ENCODE measurements at regions of chr10 and their contacts with region 1.

Region 1: DNA sequence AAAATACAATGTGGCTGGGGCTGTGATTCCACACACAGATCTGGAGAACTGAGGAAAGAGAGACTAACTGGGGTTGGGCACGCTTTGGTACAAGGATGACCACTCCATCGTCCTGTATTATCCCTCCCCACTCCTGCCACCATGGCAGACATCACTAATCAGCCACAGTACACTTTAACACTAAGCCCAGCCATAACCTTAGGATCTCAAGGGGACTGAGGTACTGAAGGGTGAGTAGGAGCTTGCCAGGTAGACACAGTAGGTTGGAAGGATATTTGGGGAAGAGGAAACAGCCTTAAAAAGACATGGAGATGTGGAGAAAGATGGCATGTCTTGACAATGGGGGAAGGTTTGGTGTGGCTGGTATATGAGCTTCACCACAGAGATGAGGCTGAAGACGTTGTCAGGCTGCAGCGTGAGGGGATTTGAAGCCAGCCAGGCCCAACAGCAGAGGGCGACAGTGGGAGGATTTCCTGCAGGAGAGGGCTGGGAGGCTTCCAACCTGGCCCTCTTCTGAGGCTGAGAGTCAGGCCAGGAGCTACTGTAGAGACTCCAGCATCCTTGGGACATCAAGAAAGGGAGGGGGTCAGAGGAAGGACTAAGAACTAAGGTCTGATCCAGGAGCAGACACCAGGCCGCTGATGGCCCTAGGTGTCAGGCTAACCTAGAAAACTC is 58.6 kb upstream of the COL13A1 start:
- DNase-seq: peak; percentile 19 to 86
- H3K4me3 ChIP-seq: no peak overlapping the region
- H3K27ac ChIP-seq: no peak overlapping the region
- H3K4me1 ChIP-seq: peaks cover 0 to 9% (median 1%) of the 10 kb centered on the region in 4 experiments; a peak in 3 of 7 replicates
- H3K27me3 ChIP-seq: no peaks in the 10 kb centered on the region
- CTCF ChIP-seq: peak; percentile 89 to 94 (median 90)
- EP300 ChIP-seq: no peak
- POLR2A ChIP-seq: no peak
- RAD21 ChIP-seq: peak; percentile 66 to 81

Region 2: GRCh38 chr10:69403519-69403918 is 339.5 kb before region 1 on chr10:
- CTCF ChIA-PET with region 1: no interaction called
- POLR2A ChIA-PET with region 1: no interaction called
- DNase-seq: no peak
- H3K4me3 ChIP-seq: no peak overlapping the region
- H3K27ac ChIP-seq: no peak overlapping the region
- H3K4me1 ChIP-seq: peaks cover 0 to 10% (median 7%) of the 10 kb centered on the region in 4 experiments; a peak in 6 of 7 replicates
- H3K27me3 ChIP-seq: no peaks in the 10 kb centered on the region
- CTCF ChIP-seq: no peak
- EP300 ChIP-seq: no peak
- POLR2A ChIP-seq: no peak
- RAD21 ChIP-seq: no peak

Region 3: GRCh38 chr10:69657430-69657829 is 85.6 kb before region 1 on chr10:
- CTCF ChIA-PET with region 1: interaction called, 992 read pairs
- POLR2A ChIA-PET with region 1: no interaction called
- DNase-seq: no peak
- H3K4me3 ChIP-seq: no peak overlapping the region
- H3K27ac ChIP-seq: no peak overlapping the region
- H3K4me1 ChIP-seq: peaks cover 0 to 26% (median 13%) of the 10 kb centered on the region in 4 experiments; a peak in 6 of 7 replicates
- H3K27me3 ChIP-seq: peaks cover 0 to 3% (median 0%) of the 10 kb centered on the region in 4 experiments; a peak in 4 of 7 replicates
- CTCF ChIP-seq: no peak
- EP300 ChIP-seq: no peak
- POLR2A ChIP-seq: no peak
- RAD21 ChIP-seq: no peak

Region 4: GRCh38 chr10:69728335-69728870 is 14.7 kb before region 1 on chr10:
- CTCF ChIA-PET with region 1: interaction called, 66 read pairs
- POLR2A ChIA-PET with region 1: interaction called, 3 read pairs
- DNase-seq: peak in 1 of 2 experiments; percentile 33
- H3K4me3 ChIP-seq: no peak overlapping the region
- H3K27ac ChIP-seq: no peak overlapping the region
- H3K4me1 ChIP-seq: peaks cover 0 to 10% (median 4%) of the 10 kb centered on the region in 4 experiments; a peak in 4 of 7 replicates
- H3K27me3 ChIP-seq: no peaks in the 10 kb centered on the region; a peak in 1 of 7 replicates
- CTCF ChIP-seq: no peak
- EP300 ChIP-seq: no peak
- POLR2A ChIP-seq: no peak
- RAD21 ChIP-seq: no peak

Region 5: DNA sequence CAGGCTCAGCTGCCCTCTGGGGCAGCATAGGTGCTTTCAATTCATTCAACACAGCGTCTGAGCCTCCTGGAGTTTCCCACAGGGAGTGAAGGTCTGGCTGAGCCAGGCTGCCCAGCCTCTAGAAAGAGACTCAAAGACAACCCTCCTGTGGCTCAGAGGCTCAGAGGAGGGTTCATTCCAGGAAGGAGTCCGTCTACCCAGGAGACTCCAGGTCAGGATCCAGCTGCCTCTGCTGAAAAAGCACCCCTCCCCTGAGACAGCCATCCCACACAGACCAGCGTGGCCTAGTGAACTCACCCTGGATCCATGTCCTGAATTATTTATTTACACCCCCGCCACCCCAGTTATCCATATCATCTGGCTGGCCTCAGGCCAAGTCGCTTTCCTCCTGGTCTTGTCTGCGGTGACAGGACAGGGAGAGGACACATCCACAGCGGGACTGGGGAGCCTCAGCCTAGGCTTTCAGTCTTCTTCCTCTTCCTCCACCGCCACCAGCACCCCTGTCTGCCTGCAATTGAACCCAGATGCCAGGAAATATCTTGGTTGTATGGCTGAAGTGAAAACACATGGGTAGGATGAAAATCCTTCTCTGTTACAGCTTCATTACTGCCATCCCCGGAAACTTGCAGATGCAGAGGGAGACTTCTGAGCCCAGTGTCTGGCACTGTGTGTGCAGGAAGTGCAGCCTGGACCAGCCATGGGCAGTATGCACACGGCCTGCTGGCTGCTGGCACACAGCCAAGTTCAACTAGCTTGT is 14.7 kb after region 1 on chr10:
- CTCF ChIA-PET with region 1: interaction called, 20 read pairs
- POLR2A ChIA-PET with region 1: interaction called, 4 read pairs
- DNase-seq: no peak
- H3K4me3 ChIP-seq: no peak overlapping the region
- H3K27ac ChIP-seq: no peak overlapping the region
- H3K4me1 ChIP-seq: no peaks in the 10 kb centered on the region
- H3K27me3 ChIP-seq: peaks cover 0 to 4% (median 0%) of the 10 kb centered on the region in 4 experiments; a peak in 2 of 7 replicates
- CTCF ChIP-seq: no peak
- EP300 ChIP-seq: no peak
- POLR2A ChIP-seq: no peak
- RAD21 ChIP-seq: no peak

Region 6: DNA sequence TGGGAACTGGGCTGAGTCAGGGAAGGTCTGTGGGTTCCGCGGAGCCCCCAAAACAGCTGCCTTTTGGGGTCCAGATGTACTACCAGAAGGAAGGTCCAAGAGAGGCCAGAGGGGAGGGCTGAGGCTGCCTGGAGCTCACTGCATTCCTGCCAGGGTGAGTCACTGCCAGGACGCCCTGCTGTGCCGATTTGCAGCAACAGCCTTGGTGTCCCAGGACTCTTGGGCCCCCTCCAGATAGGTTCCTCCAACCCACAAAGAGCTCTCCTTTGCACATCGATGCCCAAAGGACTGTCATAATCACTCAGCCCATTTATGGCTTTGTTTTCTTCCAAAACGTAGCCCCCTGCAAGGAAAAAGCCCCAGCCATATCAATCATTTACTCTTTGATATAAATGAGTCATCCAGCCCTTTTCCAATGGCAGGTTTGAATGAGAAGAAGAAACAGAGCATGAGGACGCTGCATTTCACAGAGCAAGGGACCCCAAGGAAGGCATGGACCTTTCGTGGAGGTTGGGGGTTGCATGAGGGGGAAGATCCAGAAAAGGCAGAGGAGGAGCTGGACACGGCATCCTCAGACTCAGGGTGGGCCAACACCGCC is 26.4 kb after region 1 on chr10:
- CTCF ChIA-PET with region 1: interaction called, 14 read pairs
- POLR2A ChIA-PET with region 1: no interaction called
- DNase-seq: peak; percentile 34 to 65
- H3K4me3 ChIP-seq: no peak overlapping the region
- H3K27ac ChIP-seq: no peak overlapping the region
- H3K4me1 ChIP-seq: peaks cover 0 to 11% (median 3%) of the 10 kb centered on the region in 4 experiments; a peak in 4 of 7 replicates
- H3K27me3 ChIP-seq: peaks cover 0 to 5% (median 0%) of the 10 kb centered on the region in 4 experiments; a peak in 1 of 7 replicates
- CTCF ChIP-seq: no peak
- EP300 ChIP-seq: no peak
- POLR2A ChIP-seq: no peak
- RAD21 ChIP-seq: no peak

Region 7: GRCh38 chr10:69800109-69800508 is 57.0 kb after region 1 on chr10:
- CTCF ChIA-PET with region 1: interaction called, 22 read pairs
- POLR2A ChIA-PET with region 1: no interaction called
- DNase-seq: peak in 1 of 2 experiments; percentile 74
- H3K4me3 ChIP-seq: no peak overlapping the region
- H3K27ac ChIP-seq: no peak overlapping the region
- H3K4me1 ChIP-seq: peaks cover 0 to 8% (median 4%) of the 10 kb centered on the region in 4 experiments; a peak in 4 of 7 replicates
- H3K27me3 ChIP-seq: peaks cover 10 to 34% (median 24%) of the 10 kb centered on the region in 4 experiments; a peak in 6 of 7 replicates
- CTCF ChIP-seq: peak; percentile 48 to 90 (median 76)
- EP300 ChIP-seq: no peak
- POLR2A ChIP-seq: no peak
- RAD21 ChIP-seq: peak; percentile 61 to 74

Measured in H1 (cell line).